Aorta (tissue), 5 donors: ENCODE measurements at regions of chr9 and their contacts with region 1.

Region 1: GRCh38 chr9:98192503-98193335 is at the start of gene CORO2A:
- DNase-seq: peak; percentile 78 to 90
- ATAC-seq: peak; percentile 87
- H3K4me3 ChIP-seq: peak within 1 kb of the TSS; percentile 62
- H3K27ac ChIP-seq: no peak within 1 kb of the TSS
- H3K4me1 ChIP-seq: no peaks in the 10 kb centered on the region
- H3K27me3 ChIP-seq: no peaks in the 10 kb centered on the region
- total RNA-seq, gene CORO2A: 1.6 to 3.7 TPM

Region 2: DNA sequence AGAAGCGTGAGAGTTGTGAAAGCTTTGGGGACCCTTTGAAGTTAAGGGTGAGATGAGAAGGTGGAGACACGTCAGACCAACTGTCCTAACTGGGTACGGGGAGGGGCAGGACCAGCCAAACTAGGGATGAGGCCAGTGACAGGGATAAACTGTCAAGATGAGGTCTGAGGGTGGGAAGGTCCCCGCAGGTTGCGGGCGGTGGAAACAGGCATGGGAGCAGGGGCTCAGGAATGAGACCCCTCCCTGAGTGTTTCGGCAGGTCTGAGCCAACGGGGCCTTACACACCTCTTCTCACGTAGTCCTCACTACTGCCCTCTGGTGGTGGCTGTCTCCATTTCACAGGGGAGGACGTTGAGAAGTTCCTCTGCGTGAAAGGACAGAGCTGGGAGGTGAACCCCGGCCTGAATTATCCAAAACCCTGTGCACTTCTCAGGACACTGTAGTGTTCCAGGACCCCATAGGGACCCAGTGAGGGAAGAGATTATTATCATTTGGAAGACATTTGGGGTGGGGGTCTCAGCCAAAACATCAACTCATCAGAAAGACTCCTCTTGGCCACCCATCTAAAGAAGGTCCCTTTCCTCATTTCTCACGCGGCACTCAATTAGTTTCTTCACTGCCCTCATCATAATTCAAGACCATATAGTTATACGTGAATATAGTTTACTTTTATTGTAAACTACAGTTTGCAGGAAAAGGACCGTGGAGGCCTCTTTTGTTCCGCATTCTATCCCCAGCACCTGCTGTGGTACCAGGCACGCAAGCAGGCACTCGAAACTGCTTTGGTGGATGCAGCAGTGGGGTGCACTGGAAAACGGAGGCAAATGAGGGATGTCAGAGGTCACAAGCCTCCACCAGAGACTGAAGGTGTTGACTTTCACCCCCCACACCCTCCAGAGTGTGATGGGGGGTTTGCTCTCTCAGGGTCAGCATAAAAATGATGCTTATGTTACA is 157.8 kb before region 1 on chr9:
- intact Hi-C with region 1: no loop called
- DNase-seq: peak; percentile 89 to 92
- ATAC-seq: peak; percentile 89
- H3K4me3 ChIP-seq: no peak overlapping the region
- H3K27ac ChIP-seq: peak overlapping the region in 1 of 2 donors; percentile 53
- H3K4me1 ChIP-seq: no peaks in the 10 kb centered on the region
- H3K27me3 ChIP-seq: no peaks in the 10 kb centered on the region

Region 3: GRCh38 chr9:98087420-98088354 is 105.0 kb before region 1 on chr9:
- intact Hi-C with region 1: no loop called
- DNase-seq: peak; percentile 77 to 81
- ATAC-seq: peak; percentile 78
- H3K4me3 ChIP-seq: peak overlapping the region in 1 of 2 donors; percentile 0
- H3K27ac ChIP-seq: no peak overlapping the region
- H3K4me1 ChIP-seq: no peaks in the 10 kb centered on the region
- H3K27me3 ChIP-seq: no peaks in the 10 kb centered on the region

Region 4: DNA sequence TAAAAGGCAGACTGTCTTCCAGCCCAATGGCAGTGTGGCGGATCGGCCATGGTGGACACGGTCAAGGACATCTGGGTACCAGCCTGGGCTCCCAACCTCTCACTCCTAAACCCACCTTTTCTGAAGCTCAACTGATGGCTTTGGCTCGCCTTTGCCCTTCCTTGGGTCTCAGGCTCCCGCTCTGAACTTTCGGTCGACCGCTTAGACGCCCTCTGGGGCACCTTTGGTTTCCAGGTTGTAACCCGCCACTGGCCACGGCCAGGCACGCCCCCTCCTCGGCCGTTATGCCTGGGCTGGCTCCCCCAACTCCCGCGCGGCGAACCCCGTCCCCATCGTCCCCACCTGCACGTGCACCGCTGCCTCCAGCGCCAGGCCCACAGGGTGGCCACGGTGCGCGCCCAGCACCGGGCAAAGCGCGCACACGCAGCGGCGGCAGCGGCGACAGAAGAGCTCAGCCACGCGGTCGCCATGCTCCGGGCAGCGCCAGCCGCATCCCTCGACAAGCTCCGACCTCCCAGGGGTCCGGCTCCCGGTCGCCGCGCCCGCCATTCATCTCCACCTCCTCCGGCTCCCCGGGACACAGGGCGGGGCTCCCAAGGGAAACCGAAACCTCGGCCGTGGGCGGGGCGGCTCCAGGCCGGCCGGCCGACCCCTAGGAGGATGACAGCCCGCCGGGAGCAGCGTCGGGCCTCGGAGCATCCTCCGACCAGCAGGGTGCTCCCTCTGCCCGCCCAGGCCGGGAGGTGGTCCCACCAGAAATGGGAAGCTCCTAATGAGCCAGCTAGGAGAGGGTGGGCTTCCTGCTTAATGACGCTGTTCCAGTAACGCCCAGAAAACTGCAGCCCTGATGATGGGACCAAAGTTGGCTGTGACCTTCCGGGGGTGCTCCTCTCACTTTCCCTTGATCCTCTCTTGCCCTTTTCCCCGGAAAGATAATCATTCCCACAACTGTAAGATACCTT is 73.8 kb before region 1 on chr9 and contains the start of gene TRIM14:
- intact Hi-C with region 1: loop called in 1 of 2 experiments (anchors 10 kb)
- DNase-seq: peak; percentile 84 to 85
- ATAC-seq: peak; percentile 71
- H3K4me3 ChIP-seq: peak within 1 kb of the TSS; percentile 33 to 45
- H3K27ac ChIP-seq: no peak within 1 kb of the TSS
- H3K4me1 ChIP-seq: no peaks in the 10 kb centered on the region
- H3K27me3 ChIP-seq: no peaks in the 10 kb centered on the region
- total RNA-seq, gene TRIM14: 8.5 to 17.6 TPM

Region 5: GRCh38 chr9:98231770-98232478 is 39.2 kb after region 1 on chr9:
- intact Hi-C with region 1: no loop called
- DNase-seq: peak; percentile 11 to 28
- ATAC-seq: no peak
- H3K4me3 ChIP-seq: no peak overlapping the region
- H3K27ac ChIP-seq: no peak overlapping the region
- H3K4me1 ChIP-seq: no peaks in the 10 kb centered on the region
- H3K27me3 ChIP-seq: no peaks in the 10 kb centered on the region

Region 6: DNA sequence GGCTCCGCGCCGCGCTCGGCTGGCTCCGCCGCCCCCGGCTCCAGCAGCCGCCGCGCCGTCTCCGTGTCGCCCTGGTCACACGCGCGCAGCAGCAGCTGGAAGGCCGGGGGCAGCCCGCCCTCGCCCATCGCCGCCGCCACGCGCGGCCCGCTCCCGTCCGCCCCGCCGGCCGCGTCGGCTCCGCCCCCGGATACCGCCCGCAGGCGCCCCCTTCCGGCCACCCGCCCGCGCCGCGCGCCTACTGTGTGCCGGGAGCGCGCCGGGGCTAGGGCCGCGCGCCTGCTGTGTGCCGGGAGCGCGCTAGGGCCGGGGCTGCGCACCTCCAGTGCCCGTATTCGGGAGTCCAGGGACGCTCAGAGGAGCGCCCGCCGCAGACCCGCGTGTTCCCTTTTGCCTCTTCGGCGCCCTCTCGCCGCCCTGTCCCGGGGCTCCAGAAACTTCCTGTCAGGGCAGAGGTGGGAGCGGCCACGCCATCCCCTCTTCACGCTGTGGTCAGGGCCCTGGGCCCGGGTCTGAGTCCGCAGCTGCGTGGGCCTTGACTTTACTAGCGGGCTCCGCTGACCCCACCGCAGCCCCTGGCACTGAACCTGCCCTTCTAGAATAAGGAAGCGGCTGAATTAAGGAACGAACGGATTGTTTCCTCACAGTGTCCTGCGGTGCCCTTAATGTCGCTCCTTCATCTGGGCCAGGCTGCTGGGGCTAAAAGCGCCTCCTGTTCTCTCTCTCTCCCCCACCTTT is 603.8 kb after region 1 on chr9 and contains the start of gene ANKS6:
- intact Hi-C with region 1: loop called in 1 of 2 experiments (anchors 10 kb)
- DNase-seq: peak; percentile 85 to 95
- ATAC-seq: peak; percentile 95
- H3K4me3 ChIP-seq: peak within 1 kb of the TSS; percentile 64 to 88
- H3K27ac ChIP-seq: peak within 1 kb of the TSS in 1 of 2 donors; percentile 47
- H3K4me1 ChIP-seq: no peaks in the 10 kb centered on the region
- H3K27me3 ChIP-seq: no peaks in the 10 kb centered on the region
- total RNA-seq, gene ANKS6: 19.5 to 21.9 TPM